Common myeloid progenitor, CD34-positive (primary cell): ENCODE measurements at regions of chr3 and their contacts with region 1.

Region 1: GRCh38 chr3:30768703-30769685 is 125.5 kb downstream of the GADL1 start:
- DNase-seq: peak; percentile 63 to 83 (median 74)
- H3K4me3 ChIP-seq: no peak overlapping the region
- H3K27ac ChIP-seq: no peak overlapping the region
- H3K4me1 ChIP-seq: no peaks in the 10 kb centered on the region
- H3K27me3 ChIP-seq: no peaks in the 10 kb centered on the region

Region 2: GRCh38 chr3:31132132-31132769 is 363.3 kb after region 1 on chr3:
- CTCF ChIA-PET with region 1: interaction called, 11 read pairs
- POLR2A ChIA-PET with region 1: no interaction called
- DNase-seq: peak; percentile 56 to 79 (median 75)
- H3K4me3 ChIP-seq: no peak overlapping the region
- H3K27ac ChIP-seq: no peak overlapping the region
- H3K4me1 ChIP-seq: peaks cover 0 to 9% (median 0%) of the 10 kb centered on the region in 4 experiments
- H3K27me3 ChIP-seq: no peaks in the 10 kb centered on the region